ENCODE measurements at regions of chr11 and their contacts with region 1.

Region 1: GRCh38 chr11:3854977-3855807 is at the start of gene STIM1:
- DNase-seq: peak; percentile 94 to 97 (median 96)
- ATAC-seq: peak; percentile 80
- H3K4me3 ChIP-seq: peak within 1 kb of the TSS; percentile 62
- H3K27ac ChIP-seq: peak within 1 kb of the TSS; percentile 86
- H3K4me1 ChIP-seq: peaks cover 42 to 44% of the 10 kb centered on the region in 2 experiments
- H3K27me3 ChIP-seq: no peaks in the 10 kb centered on the region
- CTCF ChIP-seq: peak; percentile 95 to 96 (median 95)
- EP300 ChIP-seq: peak; percentile 32; the same call in 1 of the 2 replicates
- POLR2A ChIP-seq: peak; percentile 72
- RAD21 ChIP-seq: peak; percentile 91 to 94
- polyA plus RNA-seq, gene STIM1: 7.7 to 8.0 TPM

Region 2: DNA sequence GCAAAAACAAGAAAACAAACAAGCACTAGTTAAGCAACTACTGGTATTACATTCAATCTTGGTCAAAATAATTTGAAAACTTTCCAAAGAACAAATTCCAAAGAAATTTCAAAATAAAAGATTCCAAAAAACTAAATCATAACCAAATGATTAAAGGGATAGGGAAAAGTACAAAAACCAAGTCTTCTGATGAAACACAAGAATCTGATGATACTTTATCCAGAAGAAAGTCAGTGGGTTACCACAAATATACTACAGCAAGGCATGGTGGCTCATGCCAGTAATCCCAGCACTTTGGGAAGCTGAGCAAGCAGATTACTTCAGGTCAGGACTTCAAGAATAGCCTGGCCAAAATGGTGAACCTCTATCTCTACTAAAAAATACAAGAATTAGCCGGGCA is 117.0 kb before region 1 on chr11:
- CTCF ChIA-PET with region 1: no interaction called
- POLR2A ChIA-PET with region 1: no interaction called
- in situ Hi-C with region 1: no loop called
- intact Hi-C with region 1: no loop called
- DNase-seq: no peak
- ATAC-seq: no peak
- H3K4me3 ChIP-seq: no peak overlapping the region
- H3K27ac ChIP-seq: no peak overlapping the region
- H3K4me1 ChIP-seq: no peaks in the 10 kb centered on the region
- H3K27me3 ChIP-seq: no peaks in the 10 kb centered on the region
- CTCF ChIP-seq: no peak
- EP300 ChIP-seq: no peak
- POLR2A ChIP-seq: no peak
- RAD21 ChIP-seq: no peak

Region 3: GRCh38 chr11:3764266-3764665 is 90.9 kb before region 1 on chr11:
- CTCF ChIA-PET with region 1: no interaction called
- POLR2A ChIA-PET with region 1: no interaction called
- in situ Hi-C with region 1: no loop called
- intact Hi-C with region 1: no loop called
- DNase-seq: no peak
- ATAC-seq: no peak
- H3K4me3 ChIP-seq: no peak overlapping the region
- H3K27ac ChIP-seq: no peak overlapping the region
- H3K4me1 ChIP-seq: no peaks in the 10 kb centered on the region
- H3K27me3 ChIP-seq: no peaks in the 10 kb centered on the region
- CTCF ChIP-seq: no peak
- EP300 ChIP-seq: no peak
- POLR2A ChIP-seq: no peak
- RAD21 ChIP-seq: no peak

Region 4: GRCh38 chr11:3867209-3868091 is 12.3 kb after region 1 on chr11:
- CTCF ChIA-PET with region 1: no interaction called
- POLR2A ChIA-PET with region 1: interaction called, 32 read pairs
- in situ Hi-C with region 1: no loop called
- intact Hi-C with region 1: loop called (anchors 1 kb)
- DNase-seq: peak; percentile 56 to 94 (median 68)
- ATAC-seq: peak; percentile 74
- H3K4me3 ChIP-seq: no peak overlapping the region
- H3K27ac ChIP-seq: peak overlapping the region; percentile 77
- H3K4me1 ChIP-seq: peaks cover 44 to 74% of the 10 kb centered on the region in 2 experiments
- H3K27me3 ChIP-seq: no peaks in the 10 kb centered on the region
- CTCF ChIP-seq: no peak
- EP300 ChIP-seq: peak; percentile 80
- POLR2A ChIP-seq: no peak
- RAD21 ChIP-seq: peak in 1 of 2 experiments; percentile 21; a peak in 2 of 4 replicates

Region 5: GRCh38 chr11:3894128-3894731 is 39.0 kb after region 1 on chr11:
- CTCF ChIA-PET with region 1: no interaction called
- POLR2A ChIA-PET with region 1: interaction called, 3 read pairs
- in situ Hi-C with region 1: no loop called
- intact Hi-C with region 1: loop called (anchors 5 kb)
- DNase-seq: peak in 2 of 4 experiments; percentile 44 to 56
- ATAC-seq: peak; percentile 79
- H3K4me3 ChIP-seq: no peak overlapping the region
- H3K27ac ChIP-seq: peak overlapping the region; percentile 70
- H3K4me1 ChIP-seq: peaks cover 19 to 38% of the 10 kb centered on the region in 2 experiments
- H3K27me3 ChIP-seq: no peaks in the 10 kb centered on the region
- CTCF ChIP-seq: no peak
- EP300 ChIP-seq: no peak
- POLR2A ChIP-seq: no peak
- RAD21 ChIP-seq: no peak

Region 6: GRCh38 chr11:3984896-3985295 is 129.7 kb after region 1 on chr11:
- CTCF ChIA-PET with region 1: no interaction called
- POLR2A ChIA-PET with region 1: no interaction called
- in situ Hi-C with region 1: no loop called
- intact Hi-C with region 1: loop called (anchors 1 kb)
- DNase-seq: peak; percentile 29 to 75 (median 52)
- ATAC-seq: peak; percentile 84
- H3K4me3 ChIP-seq: no peak overlapping the region
- H3K27ac ChIP-seq: no peak overlapping the region
- H3K4me1 ChIP-seq: peaks cover 0 to 13% of the 10 kb centered on the region in 2 experiments; a peak in 3 of 5 replicates
- H3K27me3 ChIP-seq: no peaks in the 10 kb centered on the region
- CTCF ChIP-seq: peak; percentile 58 to 78 (median 63)
- EP300 ChIP-seq: no peak
- POLR2A ChIP-seq: no peak
- RAD21 ChIP-seq: peak; percentile 78 to 81